ENCODE measurements at regions of chr12 and their contacts with region 1.

Region 1: GRCh38 chr12:21677622-21678277 is 20.1 kb upstream of the LDHB start:
- DNase-seq: peak in 1 of 5 donors; percentile 46
- H3K4me3 ChIP-seq: peak overlapping the region; percentile 48
- H3K4me3 Mint-ChIP-seq: peak overlapping the region; percentile 9 to 77 (median 37)
- H3K27ac ChIP-seq: no peak overlapping the region
- H3K27ac Mint-ChIP-seq: peak overlapping the region; percentile 16 to 92 (median 56)
- H3K4me1 ChIP-seq: peaks cover 53% of the 10 kb centered on the region
- H3K4me1 Mint-ChIP-seq: peaks cover 29 to 48% (median 46%) of the 10 kb centered on the region in 3 donors
- H3K27me3 ChIP-seq: no peaks in the 10 kb centered on the region
- H3K27me3 Mint-ChIP-seq: peaks cover 0 to 5% of the 10 kb centered on the region in 2 donors

Region 2: DNA sequence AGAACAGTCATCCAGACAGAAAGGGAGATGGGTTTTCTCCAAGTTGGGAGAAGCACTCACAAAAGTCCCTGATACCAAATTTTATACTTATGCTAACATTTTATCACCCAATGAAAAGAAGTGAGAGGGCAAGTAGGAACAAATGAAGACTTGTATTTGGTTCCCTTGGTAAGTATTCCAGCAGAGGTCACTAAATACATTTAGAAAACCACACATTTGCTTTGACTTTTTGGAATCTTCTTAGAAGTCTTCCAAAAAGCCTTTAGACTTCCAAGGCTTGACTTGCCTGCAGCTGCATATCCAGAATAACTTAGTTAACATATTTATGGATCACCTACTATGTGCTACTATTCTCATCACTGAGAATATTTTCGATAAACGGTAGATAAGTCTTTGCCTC is 70.0 kb before region 1 on chr12:
- CTCF ChIA-PET with region 1: interaction called, 45 read pairs
- POLR2A ChIA-PET with region 1: no interaction called
- DNase-seq: peak in 2 of 5 donors; percentile 27 to 37
- H3K4me3 ChIP-seq: no peak overlapping the region
- H3K4me3 Mint-ChIP-seq: no peak overlapping the region
- H3K27ac ChIP-seq: no peak overlapping the region
- H3K27ac Mint-ChIP-seq: no peak overlapping the region
- H3K4me1 ChIP-seq: peaks cover 10% of the 10 kb centered on the region
- H3K4me1 Mint-ChIP-seq: peaks cover 0 to 3% (median 0%) of the 10 kb centered on the region in 3 donors
- H3K27me3 ChIP-seq: no peaks in the 10 kb centered on the region
- H3K27me3 Mint-ChIP-seq: peaks cover 0 to 2% of the 10 kb centered on the region in 2 donors

Region 3: GRCh38 chr12:21650833-21651396 is 26.8 kb before region 1 on chr12:
- CTCF ChIA-PET with region 1: interaction called, 20 read pairs
- POLR2A ChIA-PET with region 1: no interaction called
- DNase-seq: no peak
- H3K4me3 ChIP-seq: peak overlapping the region; percentile 20
- H3K4me3 Mint-ChIP-seq: peak overlapping the region in 4 of 7 donors; percentile 2 to 66 (median 13)
- H3K27ac ChIP-seq: no peak overlapping the region
- H3K27ac Mint-ChIP-seq: peak overlapping the region; percentile 7 to 84 (median 37)
- H3K4me1 ChIP-seq: peaks cover 77% of the 10 kb centered on the region
- H3K4me1 Mint-ChIP-seq: peaks cover 72 to 97% (median 93%) of the 10 kb centered on the region in 3 donors
- H3K27me3 ChIP-seq: no peaks in the 10 kb centered on the region
- H3K27me3 Mint-ChIP-seq: no peaks in the 10 kb centered on the region

Region 4: DNA sequence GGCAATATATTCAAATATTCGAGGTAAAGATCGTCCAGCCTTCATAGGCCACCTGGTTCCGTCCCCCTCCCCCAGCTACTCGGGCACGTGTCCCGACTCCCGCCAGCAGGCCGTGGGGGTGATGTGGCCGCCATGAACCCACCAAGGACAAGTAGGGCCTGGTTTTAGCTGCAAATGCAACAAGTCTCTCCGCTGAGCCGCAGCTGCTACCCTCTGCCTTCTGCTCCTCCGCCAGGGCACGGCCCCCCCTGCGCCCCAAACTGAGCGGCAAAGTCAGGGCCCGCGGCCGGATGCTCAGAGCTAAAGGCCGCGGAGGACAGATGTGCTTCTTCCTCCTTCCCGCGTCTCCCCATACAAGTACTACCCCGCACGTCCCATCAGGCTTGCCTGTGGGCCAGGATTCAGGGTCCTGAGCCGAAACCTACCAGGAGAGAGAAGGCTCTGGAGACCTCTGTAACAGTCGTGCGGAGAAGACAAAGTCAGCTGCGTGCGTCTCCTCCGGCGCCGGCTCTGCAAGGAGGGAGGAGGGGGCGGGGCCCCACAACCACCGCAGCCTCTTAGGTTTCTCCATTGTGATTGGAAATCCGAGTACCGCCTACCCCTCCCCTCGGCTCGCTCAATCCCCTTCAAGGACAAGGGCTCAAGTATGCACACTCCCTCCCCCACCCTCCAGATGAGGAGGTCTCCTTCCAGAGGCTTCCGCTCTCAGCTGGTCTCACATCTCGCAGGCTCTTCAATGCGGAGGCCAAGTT is 20.2 kb before region 1 on chr12 and contains the start of gene LDHB:
- CTCF ChIA-PET with region 1: interaction called, 25 read pairs
- POLR2A ChIA-PET with region 1: interaction called, 32 read pairs
- DNase-seq: peak; percentile 85 to 95 (median 87)
- H3K4me3 ChIP-seq: peak within 1 kb of the TSS; percentile 91
- H3K4me3 Mint-ChIP-seq: peak within 1 kb of the TSS; percentile 92 to 99 (median 96)
- H3K27ac ChIP-seq: peak within 1 kb of the TSS; percentile 78
- H3K27ac Mint-ChIP-seq: peak within 1 kb of the TSS; percentile 90 to 99 (median 96)
- H3K4me1 ChIP-seq: peaks cover 39% of the 10 kb centered on the region
- H3K4me1 Mint-ChIP-seq: peaks cover 54 to 68% (median 60%) of the 10 kb centered on the region in 3 donors
- H3K27me3 ChIP-seq: no peaks in the 10 kb centered on the region
- H3K27me3 Mint-ChIP-seq: no peaks in the 10 kb centered on the region
- total RNA-seq, gene LDHB: 1,700 to 1,721 TPM

Region 5: GRCh38 chr12:21690704-21691368 is 13.1 kb after region 1 on chr12:
- CTCF ChIA-PET with region 1: interaction called, 11 read pairs
- POLR2A ChIA-PET with region 1: interaction called, 3 read pairs
- DNase-seq: peak in 2 of 5 donors; percentile 30 to 31
- H3K4me3 ChIP-seq: no peak overlapping the region
- H3K4me3 Mint-ChIP-seq: peak overlapping the region in 5 of 7 donors; percentile 5 to 60 (median 49)
- H3K27ac ChIP-seq: no peak overlapping the region
- H3K27ac Mint-ChIP-seq: peak overlapping the region; percentile 19 to 91 (median 70)
- H3K4me1 ChIP-seq: peaks cover 23% of the 10 kb centered on the region
- H3K4me1 Mint-ChIP-seq: peaks cover 28 to 40% (median 32%) of the 10 kb centered on the region in 3 donors
- H3K27me3 ChIP-seq: no peaks in the 10 kb centered on the region
- H3K27me3 Mint-ChIP-seq: peaks cover 3 to 5% of the 10 kb centered on the region in 2 donors